ENCODE measurements at regions of chr14 and their contacts with region 1.

Region 1: DNA sequence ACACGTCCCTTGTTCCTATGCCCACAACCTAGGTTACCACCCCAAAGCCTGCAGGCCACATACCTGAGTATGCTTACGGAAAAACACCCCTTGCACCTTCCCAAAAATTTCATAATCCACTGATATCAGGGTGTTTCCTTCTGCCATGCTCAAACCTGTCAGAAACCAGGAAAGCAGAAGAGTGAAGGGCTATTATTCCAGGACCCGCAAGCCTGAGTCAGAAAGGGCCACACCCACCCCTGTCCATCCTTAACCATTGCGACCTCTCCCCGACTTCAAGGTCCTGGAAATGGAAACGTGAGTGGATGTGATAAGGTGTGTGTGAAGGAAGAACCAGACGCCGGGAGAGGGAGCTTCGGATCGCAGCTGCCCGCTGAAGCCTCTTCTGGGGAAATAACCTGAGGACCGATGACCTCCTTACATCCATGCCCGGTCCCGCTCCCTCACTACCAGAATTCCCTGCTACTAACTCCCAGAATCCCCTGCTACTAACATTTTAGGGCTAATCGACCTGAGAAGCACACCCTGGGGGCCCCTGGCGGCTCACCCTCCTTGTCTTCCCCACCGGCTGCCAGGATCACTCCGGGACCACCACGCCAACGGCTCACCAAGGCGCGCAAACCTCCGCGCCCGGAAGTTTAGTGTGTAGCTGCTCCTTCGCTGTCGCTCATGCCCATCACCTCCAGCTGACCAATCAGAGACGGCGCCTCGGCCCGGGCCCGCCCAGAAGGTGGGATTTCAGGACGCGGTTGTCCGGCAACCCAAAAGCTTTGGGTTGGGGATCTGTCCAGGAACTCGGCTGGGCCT is at the start of gene ACYP1:
- DNase-seq: peak; percentile 85 to 89 (median 88)
- H3K4me3 ChIP-seq: peak within 1 kb of the TSS; percentile 81 to 100 (median 93)
- H3K27ac ChIP-seq: peak within 1 kb of the TSS; percentile 69 to 76
- H3K4me1 ChIP-seq: peaks cover 9 to 20% (median 15%) of the 10 kb centered on the region in 4 experiments
- H3K27me3 ChIP-seq: no peaks in the 10 kb centered on the region

Region 2: GRCh38 chr14:75077794-75078193 is 14.2 kb after region 1 on chr14:
- CTCF ChIA-PET with region 1: interaction called, 11 read pairs
- POLR2A ChIA-PET with region 1: interaction called, 3 read pairs
- DNase-seq: peak in 2 of 3 donors; percentile 27 to 40
- H3K4me3 ChIP-seq: no peak overlapping the region
- H3K27ac ChIP-seq: no peak overlapping the region
- H3K4me1 ChIP-seq: peaks cover 0 to 5% (median 2%) of the 10 kb centered on the region in 4 experiments
- H3K27me3 ChIP-seq: no peaks in the 10 kb centered on the region

Region 3: GRCh38 chr14:75165586-75166391 is 102.2 kb after region 1 on chr14:
- CTCF ChIA-PET with region 1: no interaction called
- POLR2A ChIA-PET with region 1: no interaction called
- DNase-seq: no peak
- H3K4me3 ChIP-seq: no peak overlapping the region
- H3K27ac ChIP-seq: no peak overlapping the region
- H3K4me1 ChIP-seq: peaks cover 0 to 11% (median under 1%) of the 10 kb centered on the region in 4 experiments
- H3K27me3 ChIP-seq: no peaks in the 10 kb centered on the region